Gastrocnemius medialis (tissue), 4 donors: ENCODE measurements at regions of chr21 and their contacts with region 1.

Region 1: DNA sequence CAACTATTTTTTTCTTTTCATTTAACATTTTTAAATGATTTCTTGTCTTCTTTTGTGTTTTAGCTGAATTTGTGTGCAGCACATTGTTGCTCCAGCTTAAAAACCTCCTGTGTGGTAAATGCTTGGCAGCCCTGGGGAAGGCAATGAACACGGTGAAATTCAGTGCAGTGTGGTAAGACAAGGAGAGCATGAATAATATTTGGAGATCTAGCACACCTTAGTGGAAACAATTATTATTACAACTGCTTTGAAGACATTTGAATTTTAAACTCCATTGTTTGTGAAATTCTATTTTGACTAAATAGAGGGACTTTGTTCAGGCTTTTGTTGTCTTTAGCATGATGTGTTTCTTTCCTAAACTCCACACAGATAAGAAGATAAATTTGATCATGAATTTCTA is 242.6 kb upstream of the CXADR start:
- DNase-seq: peak in 1 of 2 donors; percentile 22
- ATAC-seq: peak; percentile 56 to 65
- H3K4me3 ChIP-seq: no peak overlapping the region
- H3K27ac ChIP-seq: no peak overlapping the region
- H3K4me1 ChIP-seq: peaks cover 0 to 4% of the 10 kb centered on the region in 2 donors
- H3K27me3 ChIP-seq: no peaks in the 10 kb centered on the region
- CTCF ChIP-seq: peak in 2 of 5 experiments; percentile 33 to 40
- POLR2A ChIP-seq: no peak

Region 2: DNA sequence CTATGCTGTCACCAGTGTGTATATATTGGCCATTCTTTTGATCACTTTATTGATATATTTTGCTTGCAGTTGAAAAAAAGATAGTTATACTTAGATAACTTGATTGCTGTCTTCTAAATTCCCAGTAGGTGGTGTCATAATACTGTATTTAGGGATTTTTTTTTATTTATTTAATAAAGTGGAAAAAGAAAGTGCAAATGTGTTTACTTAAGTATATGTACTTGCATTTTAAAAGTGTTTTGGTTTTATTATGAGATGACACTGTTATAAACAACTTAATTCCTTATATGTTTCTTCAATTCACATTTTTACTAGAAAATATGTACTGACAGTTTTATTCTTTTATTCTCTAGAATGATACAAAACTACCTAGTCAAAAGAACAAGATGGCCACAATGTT is 1375.6 kb before region 1 on chr21:
- in situ Hi-C with region 1: loop called in 1 of 4 experiments (anchors 25 kb)
- intact Hi-C with region 1: no loop called
- DNase-seq: no peak
- ATAC-seq: no peak
- H3K4me3 ChIP-seq: no peak overlapping the region
- H3K27ac ChIP-seq: no peak overlapping the region
- H3K4me1 ChIP-seq: peaks cover 4 to 6% of the 10 kb centered on the region in 2 donors
- H3K27me3 ChIP-seq: no peaks in the 10 kb centered on the region
- CTCF ChIP-seq: peak in 2 of 5 experiments; percentile 4 to 18
- POLR2A ChIP-seq: no peak

Region 3: DNA sequence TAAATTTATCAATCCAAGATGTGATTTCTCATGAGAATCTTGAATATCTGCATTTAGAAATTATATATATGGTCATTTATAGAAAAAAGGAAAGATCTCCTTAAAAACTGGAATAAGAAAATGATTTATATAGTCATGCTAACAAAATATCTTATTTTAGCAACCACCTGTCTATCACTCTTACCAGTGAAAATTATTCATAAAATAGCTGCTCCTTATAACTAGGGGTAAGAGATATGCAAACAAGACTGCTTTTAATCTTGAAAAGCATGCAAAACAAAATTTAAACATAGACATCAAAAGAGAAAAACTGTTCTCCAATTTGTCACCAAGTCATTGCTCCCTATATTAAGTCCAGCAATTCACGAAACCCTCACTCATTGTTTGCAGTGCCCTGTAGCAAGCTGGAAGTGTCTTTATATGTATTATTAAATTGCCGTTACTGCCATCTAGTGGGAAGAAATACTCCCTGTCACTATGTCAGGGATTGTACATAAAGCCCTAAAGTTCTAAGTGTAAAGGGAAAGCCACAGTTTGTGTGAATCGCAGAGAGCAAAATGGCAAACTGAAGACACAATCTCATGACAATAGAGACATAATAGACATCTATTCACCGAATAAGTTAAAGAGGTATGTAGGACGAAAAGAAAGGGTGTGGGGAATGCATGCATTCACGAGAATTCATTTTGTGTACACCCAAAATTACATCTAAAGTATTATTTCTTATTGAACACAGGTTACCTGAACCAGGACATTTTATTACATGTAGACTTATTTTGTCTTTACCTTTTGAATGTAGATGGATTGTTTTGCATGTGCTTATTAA is 939.9 kb before region 1 on chr21:
- in situ Hi-C with region 1: loop called in 1 of 4 experiments (anchors 25 kb)
- intact Hi-C with region 1: no loop called
- DNase-seq: peak in 1 of 2 donors; percentile 26
- ATAC-seq: peak; percentile 98 to 99
- H3K4me3 ChIP-seq: no peak overlapping the region
- H3K27ac ChIP-seq: peak overlapping the region in 1 of 4 donors; percentile 13
- H3K4me1 ChIP-seq: peaks cover 0 to 11% of the 10 kb centered on the region in 2 donors
- H3K27me3 ChIP-seq: no peaks in the 10 kb centered on the region
- CTCF ChIP-seq: peak; percentile 59 to 79 (median 70)
- POLR2A ChIP-seq: no peak

Region 4: GRCh38 chr21:16370186-16370585 is 900.0 kb before region 1 on chr21:
- in situ Hi-C with region 1: loop called in 1 of 4 experiments (anchors 25 kb)
- intact Hi-C with region 1: no loop called
- DNase-seq: peak; percentile 51 to 57
- ATAC-seq: peak; percentile 99
- H3K4me3 ChIP-seq: peak overlapping the region in 2 of 4 donors; percentile 2 to 12
- H3K27ac ChIP-seq: peak overlapping the region; percentile 40 to 70 (median 52)
- H3K4me1 ChIP-seq: peaks cover 6 to 12% of the 10 kb centered on the region in 2 donors
- H3K27me3 ChIP-seq: no peaks in the 10 kb centered on the region
- CTCF ChIP-seq: no peak
- POLR2A ChIP-seq: no peak

Region 5: DNA sequence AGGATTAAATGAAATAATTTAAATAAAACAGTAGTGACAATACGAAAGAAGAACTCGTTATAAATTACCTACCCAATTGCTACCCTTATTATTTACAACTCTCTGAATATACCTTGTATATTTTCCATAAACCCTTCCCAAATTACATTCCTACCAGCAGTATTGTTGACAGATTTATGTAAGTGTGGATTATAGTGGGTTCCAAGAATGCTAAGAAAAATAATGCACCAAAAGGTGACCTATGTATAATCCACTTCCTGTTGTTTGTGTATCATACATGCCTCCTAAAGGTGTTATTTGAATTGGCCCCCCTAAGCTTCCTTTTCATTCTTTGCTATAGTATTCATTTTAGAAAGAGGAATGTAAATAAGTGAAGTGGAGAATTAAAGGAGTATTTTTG is 209.4 kb after region 1 on chr21:
- in situ Hi-C with region 1: no loop called
- intact Hi-C with region 1: no loop called
- DNase-seq: no peak
- ATAC-seq: no peak
- H3K4me3 ChIP-seq: no peak overlapping the region
- H3K27ac ChIP-seq: no peak overlapping the region
- H3K4me1 ChIP-seq: no peaks in the 10 kb centered on the region
- H3K27me3 ChIP-seq: no peaks in the 10 kb centered on the region
- CTCF ChIP-seq: no peak
- POLR2A ChIP-seq: no peak